Activated naive CD4-positive, alpha-beta T cell treated with anti-CD3 and anti-CD28 coated beads, Interleukin-2, amount 10 ng/mL, durations not matched to agents 7 days and 5 days (primary cell): ENCODE measurements at regions of chr1 and their contacts with region 1.

Region 1: DNA sequence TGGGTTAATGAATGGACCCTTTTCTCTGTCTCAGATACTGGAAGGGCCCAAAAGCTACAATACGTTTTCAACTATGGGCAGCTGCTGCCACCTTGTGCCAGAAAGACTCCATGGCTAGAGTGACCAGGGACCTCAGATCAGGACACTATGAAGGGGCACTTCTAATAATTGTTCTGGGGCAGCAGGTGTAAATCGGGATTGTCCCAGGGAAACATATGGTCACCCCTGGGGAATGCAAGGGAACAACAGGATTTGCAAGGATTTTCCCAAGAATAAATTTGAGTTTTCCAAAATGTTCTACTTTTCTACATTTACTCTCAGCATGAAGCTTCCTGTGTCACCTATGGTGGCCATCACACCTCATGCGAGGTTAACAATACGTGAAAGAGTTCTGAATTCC is 12.0 kb upstream of the FCAMR start:
- DNase-seq: peak; percentile 78
- H3K4me3 Mint-ChIP-seq: no peak overlapping the region
- H3K27ac Mint-ChIP-seq: no peak overlapping the region
- H3K4me1 Mint-ChIP-seq: no peaks in the 10 kb centered on the region
- H3K27me3 Mint-ChIP-seq: peaks cover 60% of the 10 kb centered on the region

Region 2: GRCh38 chr1:206725109-206725963 is 256.9 kb before region 1 on chr1:
- CTCF ChIA-PET with region 1: interaction called, 39 read pairs
- DNase-seq: peak; percentile 80
- H3K4me3 Mint-ChIP-seq: no peak overlapping the region
- H3K27ac Mint-ChIP-seq: no peak overlapping the region
- H3K4me1 Mint-ChIP-seq: peaks cover 26% of the 10 kb centered on the region
- H3K27me3 Mint-ChIP-seq: no peaks in the 10 kb centered on the region

Region 3: GRCh38 chr1:206925106-206925736 is 57.0 kb before region 1 on chr1:
- CTCF ChIA-PET with region 1: interaction called, 265 read pairs
- DNase-seq: peak; percentile 67
- H3K4me3 Mint-ChIP-seq: no peak overlapping the region
- H3K27ac Mint-ChIP-seq: no peak overlapping the region
- H3K4me1 Mint-ChIP-seq: peaks cover 28% of the 10 kb centered on the region
- H3K27me3 Mint-ChIP-seq: no peaks in the 10 kb centered on the region

Region 4: GRCh38 chr1:206971029-206971655 is 11.1 kb before region 1 on chr1:
- CTCF ChIA-PET with region 1: interaction called, 45 read pairs
- DNase-seq: no peak
- H3K4me3 Mint-ChIP-seq: no peak overlapping the region
- H3K27ac Mint-ChIP-seq: no peak overlapping the region
- H3K4me1 Mint-ChIP-seq: peaks cover 27% of the 10 kb centered on the region
- H3K27me3 Mint-ChIP-seq: peaks cover 37% of the 10 kb centered on the region

Region 5: GRCh38 chr1:207084701-207085180 is 102.5 kb after region 1 on chr1:
- CTCF ChIA-PET with region 1: no interaction called
- DNase-seq: peak; percentile 68
- H3K4me3 Mint-ChIP-seq: no peak overlapping the region
- H3K27ac Mint-ChIP-seq: no peak overlapping the region
- H3K4me1 Mint-ChIP-seq: peaks cover 34% of the 10 kb centered on the region
- H3K27me3 Mint-ChIP-seq: peaks cover 13% of the 10 kb centered on the region